ENCODE measurements at regions of chr3 and their contacts with region 1.

Region 1: DNA sequence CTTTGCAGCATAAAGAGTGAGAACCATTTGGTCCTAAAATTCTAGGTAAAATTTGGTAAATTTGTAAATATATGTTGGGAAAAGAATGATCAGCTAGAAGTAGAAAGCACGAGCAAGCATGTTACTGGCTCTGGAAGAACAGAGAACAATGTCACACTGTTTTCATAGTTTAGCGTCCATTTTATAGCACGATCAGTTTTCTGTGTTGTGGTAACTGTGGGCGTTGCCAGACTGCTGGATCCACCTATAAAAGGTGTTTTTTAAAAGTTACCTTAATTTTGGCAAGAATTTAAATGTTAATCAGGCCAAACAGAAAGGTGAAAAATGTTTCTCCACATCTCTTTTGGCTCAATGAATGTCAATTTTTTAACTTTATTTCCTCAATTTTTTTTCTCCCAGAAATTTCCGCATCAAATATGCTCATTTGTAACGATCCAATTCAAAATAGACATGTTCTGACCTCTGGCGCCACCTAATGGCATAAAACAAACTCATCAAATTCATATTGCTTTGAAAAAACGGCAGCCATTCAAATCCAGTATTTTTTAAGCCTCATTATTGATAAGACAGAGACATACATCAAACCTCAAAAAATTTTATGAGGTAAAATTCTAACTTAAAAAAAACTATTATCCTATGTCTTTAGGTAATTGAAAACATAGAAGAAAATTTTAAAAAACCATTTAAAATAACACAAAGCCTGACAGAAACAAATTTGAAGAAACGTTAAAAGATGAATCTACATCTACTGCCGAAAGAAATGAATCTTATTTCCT is 5.5 kb upstream of the GP5 start:
- DNase-seq: peak; percentile 59
- ATAC-seq: no peak
- H3K4me3 Mint-ChIP-seq: no peak overlapping the region
- H3K27ac Mint-ChIP-seq: peak overlapping the region; percentile 51
- H3K4me1 Mint-ChIP-seq: peaks cover 26% of the 10 kb centered on the region
- H3K27me3 Mint-ChIP-seq: no peaks in the 10 kb centered on the region

Region 2: GRCh38 chr3:194250098-194251002 is 154.2 kb before region 1 on chr3:
- CTCF ChIA-PET with region 1: no interaction called
- POLR2A ChIA-PET with region 1: no interaction called
- intact Hi-C with region 1: no loop called
- DNase-seq: no peak
- ATAC-seq: no peak
- H3K4me3 Mint-ChIP-seq: no peak overlapping the region
- H3K27ac Mint-ChIP-seq: no peak overlapping the region
- H3K4me1 Mint-ChIP-seq: peaks cover 4% of the 10 kb centered on the region
- H3K27me3 Mint-ChIP-seq: no peaks in the 10 kb centered on the region

Region 3: DNA sequence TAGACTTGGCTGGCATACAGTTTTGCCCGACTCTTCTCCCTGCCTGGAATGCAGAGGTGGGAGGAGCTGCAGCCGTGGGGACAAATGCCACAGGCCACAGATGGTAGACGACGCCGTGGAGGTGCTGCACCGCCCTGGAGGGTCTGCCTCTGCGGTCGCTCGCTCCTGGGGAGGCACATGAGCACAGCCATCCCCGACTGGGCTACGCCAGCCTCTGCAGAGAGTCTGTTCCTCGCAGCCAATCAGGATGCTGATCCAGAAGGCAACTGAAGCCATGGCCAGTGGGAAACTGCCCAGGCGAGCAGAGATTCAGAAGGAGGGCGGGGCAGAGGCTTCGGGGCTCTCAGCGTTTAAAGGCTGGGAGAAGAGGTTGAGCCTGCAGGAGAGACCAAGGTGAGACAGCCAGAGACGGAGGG is 23.1 kb before region 1 on chr3:
- CTCF ChIA-PET with region 1: no interaction called
- POLR2A ChIA-PET with region 1: no interaction called
- intact Hi-C with region 1: no loop called
- DNase-seq: no peak
- ATAC-seq: no peak
- H3K4me3 Mint-ChIP-seq: no peak overlapping the region
- H3K27ac Mint-ChIP-seq: no peak overlapping the region
- H3K4me1 Mint-ChIP-seq: no peaks in the 10 kb centered on the region
- H3K27me3 Mint-ChIP-seq: peaks cover 3% of the 10 kb centered on the region

Region 4: DNA sequence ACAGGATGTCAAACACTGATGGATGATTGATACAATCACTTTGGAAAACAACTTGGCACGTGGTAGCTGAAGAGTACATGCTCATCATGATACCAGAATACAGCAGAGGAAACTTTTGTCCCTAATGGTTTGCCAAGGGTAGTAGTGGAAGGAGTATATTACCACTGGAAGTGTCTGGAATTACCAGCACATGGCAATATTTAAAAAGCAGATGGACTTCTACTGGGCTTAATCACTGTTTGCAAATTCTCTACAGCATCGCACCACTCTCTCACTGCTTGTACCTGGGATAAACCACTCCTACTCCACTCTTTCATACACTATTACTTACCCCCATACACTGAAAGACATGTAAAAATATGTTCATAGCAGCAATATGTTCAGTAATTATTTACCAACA is 14.1 kb after region 1 on chr3:
- CTCF ChIA-PET with region 1: interaction called, 10 read pairs
- POLR2A ChIA-PET with region 1: no interaction called
- intact Hi-C with region 1: no loop called
- DNase-seq: no peak
- ATAC-seq: no peak
- H3K4me3 Mint-ChIP-seq: no peak overlapping the region
- H3K27ac Mint-ChIP-seq: no peak overlapping the region
- H3K4me1 Mint-ChIP-seq: no peaks in the 10 kb centered on the region
- H3K27me3 Mint-ChIP-seq: no peaks in the 10 kb centered on the region

Region 5: DNA sequence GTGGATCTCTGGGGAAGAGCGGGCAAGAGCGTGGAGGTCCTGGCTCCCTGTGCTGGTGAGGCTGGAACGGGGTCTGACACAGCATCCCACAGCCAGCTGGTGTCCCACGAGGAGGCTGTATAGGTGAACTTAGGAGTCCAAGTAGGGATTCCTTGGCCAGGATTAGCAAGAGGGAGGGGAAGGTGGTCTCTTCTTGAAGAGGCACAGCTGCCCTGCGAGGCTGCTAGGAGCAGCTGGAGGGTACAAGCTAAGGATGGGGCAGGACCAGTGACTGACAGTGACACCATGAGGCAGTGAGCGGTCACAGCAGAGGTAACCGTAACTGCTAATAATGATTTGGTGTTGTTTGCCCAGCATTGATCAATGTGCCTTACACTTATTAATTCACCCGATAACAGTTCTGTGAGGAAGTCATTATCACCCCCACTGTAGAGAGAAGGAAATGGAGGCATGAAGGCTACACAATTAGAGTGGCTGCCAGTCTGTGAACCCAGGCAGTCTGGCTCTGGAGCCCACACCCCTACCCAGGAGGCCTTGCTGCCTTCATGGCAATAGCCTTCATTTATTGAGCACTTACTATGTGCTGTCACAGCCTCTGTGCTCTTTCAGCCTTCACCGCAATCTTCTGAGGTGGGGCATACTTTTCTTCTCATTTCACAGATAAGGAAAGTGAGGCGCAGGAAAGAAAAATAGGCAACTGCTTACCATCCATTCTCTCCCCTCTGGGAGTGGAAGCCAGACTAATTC is 169.3 kb after region 1 on chr3:
- CTCF ChIA-PET with region 1: no interaction called
- POLR2A ChIA-PET with region 1: no interaction called
- intact Hi-C with region 1: loop called in 1 of 2 experiments (anchors 5 kb)
- DNase-seq: peak; percentile 65
- ATAC-seq: peak; percentile 92
- H3K4me3 Mint-ChIP-seq: no peak overlapping the region
- H3K27ac Mint-ChIP-seq: no peak overlapping the region
- H3K4me1 Mint-ChIP-seq: peaks cover 22% of the 10 kb centered on the region
- H3K27me3 Mint-ChIP-seq: peaks cover 20% of the 10 kb centered on the region

Measured in activated CD4-positive, alpha-beta T cell treated with anti-CD3 and anti-CD28 coated beads for 36 hours (primary cell).